ENCODE measurements at regions of chr17 and their contacts with region 1.

Region 1: DNA sequence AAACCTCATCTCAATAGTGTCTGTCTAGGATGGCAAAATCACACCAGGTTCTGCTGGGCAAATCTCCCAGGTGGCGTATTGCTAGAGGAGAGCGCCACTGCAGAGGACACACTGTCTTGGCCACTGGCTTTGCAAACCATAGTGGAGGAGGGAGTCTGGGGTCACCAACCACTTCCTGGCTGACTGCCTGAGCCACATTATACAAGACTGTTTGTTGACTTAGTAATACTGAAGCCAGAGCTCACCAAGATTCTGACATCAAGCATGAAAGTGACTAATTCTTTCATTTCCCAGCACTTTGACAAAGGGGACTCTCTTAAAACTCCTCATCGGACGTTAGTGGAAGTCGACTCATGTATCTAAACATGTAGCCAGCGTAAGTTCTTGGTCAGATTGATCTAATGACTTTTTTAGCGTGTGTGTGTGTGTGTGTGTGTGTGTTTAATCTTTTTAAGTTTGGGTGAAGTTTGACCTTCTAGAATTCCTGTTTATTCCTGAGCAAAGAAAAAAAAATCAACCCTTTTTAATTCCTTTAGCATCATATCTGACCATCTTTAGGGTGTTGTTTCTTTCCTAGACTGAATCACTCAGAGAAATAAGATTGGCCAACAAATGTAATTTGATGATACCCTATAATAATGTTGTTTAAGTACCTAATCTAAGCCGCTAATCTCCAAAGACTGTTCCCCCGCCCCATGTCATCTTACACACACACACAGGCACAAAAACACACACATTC is 13.7 kb downstream of the PITPNC1 start:
- DNase-seq: peak in 2 of 3 donors; percentile 76 to 79
- H3K4me3 ChIP-seq: no peak overlapping the region
- H3K27ac ChIP-seq: no peak overlapping the region
- H3K4me1 ChIP-seq: peaks cover 4 to 14% (median 10%) of the 10 kb centered on the region in 4 experiments
- H3K27me3 ChIP-seq: no peaks in the 10 kb centered on the region

Region 2: DNA sequence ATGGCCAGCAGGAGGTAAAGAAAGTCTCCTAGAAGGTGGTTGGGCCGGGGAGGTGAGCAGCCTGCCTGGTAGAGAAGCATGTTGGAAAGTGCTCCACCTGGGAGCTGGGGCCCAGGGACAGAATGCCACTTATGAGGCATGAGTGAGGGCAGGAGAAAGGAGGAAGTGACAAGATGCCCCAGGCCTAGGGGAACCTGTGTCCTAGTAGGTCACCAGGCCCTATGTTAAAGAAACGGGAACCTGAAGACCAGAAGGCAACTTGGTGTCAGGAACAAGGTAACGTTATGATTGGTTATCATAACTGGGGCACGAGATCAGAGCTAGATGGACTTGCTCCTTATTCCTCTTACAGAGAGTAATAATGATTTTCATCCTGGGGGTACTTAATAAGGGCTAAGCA is 20.6 kb after region 1 on chr17:
- CTCF ChIA-PET with region 1: no interaction called
- POLR2A ChIA-PET with region 1: no interaction called
- DNase-seq: peak in 2 of 3 donors; percentile 33 to 42
- H3K4me3 ChIP-seq: no peak overlapping the region
- H3K27ac ChIP-seq: no peak overlapping the region
- H3K4me1 ChIP-seq: peaks cover 0 to 10% (median 1%) of the 10 kb centered on the region in 4 experiments
- H3K27me3 ChIP-seq: no peaks in the 10 kb centered on the region

Region 3: DNA sequence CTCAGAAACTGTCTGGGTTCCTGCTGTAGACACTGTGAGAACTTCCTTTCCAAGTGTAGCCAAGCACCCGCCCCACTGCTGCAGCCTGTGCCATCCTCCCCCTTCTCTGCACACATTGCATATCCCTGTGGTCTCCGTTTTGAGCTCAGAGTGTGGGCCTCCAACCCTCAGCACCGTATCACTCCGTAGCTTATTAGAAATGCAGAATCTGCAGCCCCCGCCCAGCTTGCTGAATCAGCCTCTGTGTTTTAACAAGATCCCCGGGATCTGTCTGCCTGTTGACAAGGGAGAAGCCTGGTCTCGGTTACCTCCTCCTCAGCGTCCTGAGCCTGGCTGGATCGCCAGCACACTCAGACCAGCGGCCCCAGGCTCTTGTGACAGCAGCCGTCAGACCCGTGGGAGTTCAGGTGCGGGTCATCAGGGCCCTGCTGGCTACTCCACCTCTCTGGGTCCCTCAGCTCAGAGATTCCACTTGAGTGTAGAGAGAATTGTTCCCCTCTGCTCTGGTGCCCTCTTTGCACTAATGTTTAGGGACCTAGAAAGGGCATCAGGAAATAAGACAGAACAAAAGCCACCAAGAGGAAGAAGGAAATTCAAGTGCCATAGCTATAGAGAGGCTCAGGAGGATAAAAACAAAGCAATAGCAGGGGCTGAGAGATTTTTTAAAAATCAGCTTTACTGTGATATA is 78.5 kb after region 1 on chr17:
- CTCF ChIA-PET with region 1: interaction called, 52 read pairs
- POLR2A ChIA-PET with region 1: no interaction called
- DNase-seq: peak in 1 of 3 donors; percentile 27
- H3K4me3 ChIP-seq: peak overlapping the region in 1 of 7 experiments; percentile 32
- H3K27ac ChIP-seq: peak overlapping the region in 1 of 2 experiments; percentile 6
- H3K4me1 ChIP-seq: peaks cover 0 to 17% (median 3%) of the 10 kb centered on the region in 4 experiments
- H3K27me3 ChIP-seq: no peaks in the 10 kb centered on the region

Region 4: GRCh38 chr17:67475236-67475937 is 84.6 kb after region 1 on chr17:
- CTCF ChIA-PET with region 1: interaction called, 52 read pairs
- POLR2A ChIA-PET with region 1: interaction called, 3 read pairs
- DNase-seq: peak; percentile 80 to 91 (median 89)
- H3K4me3 ChIP-seq: peak overlapping the region in 2 of 7 experiments; percentile 25 to 45
- H3K27ac ChIP-seq: no peak overlapping the region
- H3K4me1 ChIP-seq: peaks cover 6 to 16% (median 8%) of the 10 kb centered on the region in 4 experiments
- H3K27me3 ChIP-seq: no peaks in the 10 kb centered on the region